Psoas muscle (tissue), 8 donors: ENCODE measurements at regions of chr5 and their contacts with region 1.

Region 1: GRCh38 chr5:107673368-107674136 is 2.8 kb upstream of the EFNA5 start:
- DNase-seq: peak; percentile 83 to 91
- ATAC-seq: peak; percentile 74 to 86 (median 80)
- H3K4me3 ChIP-seq: peak overlapping the region; percentile 71
- H3K27ac ChIP-seq: no peak overlapping the region
- H3K4me1 ChIP-seq: peaks cover 11% of the 10 kb centered on the region
- H3K27me3 ChIP-seq: peaks cover 0 to 32% (median 7%) of the 10 kb centered on the region in 3 donors
- CTCF ChIP-seq: peak; percentile 94

Region 2: DNA sequence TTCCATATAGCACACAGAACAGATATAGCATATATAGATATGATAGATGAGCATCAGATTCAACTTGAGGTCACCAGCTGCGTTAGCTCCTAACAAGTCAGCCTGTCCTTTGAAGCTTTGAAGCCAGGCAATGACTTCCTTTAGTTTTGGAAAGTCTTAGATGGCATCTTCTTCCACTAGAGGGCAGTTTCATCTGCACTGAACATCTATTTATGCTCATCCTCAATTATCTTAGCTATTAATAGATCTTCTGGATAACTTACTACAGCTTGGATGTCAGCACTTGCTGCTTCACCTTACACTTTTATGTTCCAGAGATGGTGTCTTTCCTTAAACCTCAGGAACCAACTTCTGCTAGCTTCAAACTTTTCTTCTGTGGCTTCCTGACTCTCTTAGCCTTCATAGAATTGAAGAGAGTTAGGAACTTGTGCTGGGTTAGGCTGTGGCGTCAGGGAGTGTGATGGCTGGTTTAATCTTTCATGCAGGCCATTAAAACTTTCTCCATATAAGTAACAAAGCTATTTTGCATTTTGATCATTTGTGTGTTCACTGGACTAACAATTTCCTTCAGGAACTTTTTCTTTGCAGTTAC is 1404.2 kb before region 1 on chr5:
- intact Hi-C with region 1: loop called in 1 of 2 experiments (anchors 10 kb)
- DNase-seq: no peak
- ATAC-seq: peak; percentile 55 to 86 (median 72)
- H3K4me3 ChIP-seq: no peak overlapping the region
- H3K27ac ChIP-seq: no peak overlapping the region
- H3K4me1 ChIP-seq: peaks cover 5% of the 10 kb centered on the region
- H3K27me3 ChIP-seq: no peaks in the 10 kb centered on the region
- CTCF ChIP-seq: peak; percentile 59

Region 3: GRCh38 chr5:107542428-107542827 is 131.1 kb before region 1 on chr5:
- intact Hi-C with region 1: loop called in 1 of 2 experiments (anchors 5 kb)
- DNase-seq: peak; percentile 85 to 86
- ATAC-seq: peak; percentile 82 to 92 (median 91)
- H3K4me3 ChIP-seq: peak overlapping the region; percentile 11
- H3K27ac ChIP-seq: peak overlapping the region; percentile 79
- H3K4me1 ChIP-seq: peaks cover 16% of the 10 kb centered on the region
- H3K27me3 ChIP-seq: no peaks in the 10 kb centered on the region
- CTCF ChIP-seq: no peak

Region 4: DNA sequence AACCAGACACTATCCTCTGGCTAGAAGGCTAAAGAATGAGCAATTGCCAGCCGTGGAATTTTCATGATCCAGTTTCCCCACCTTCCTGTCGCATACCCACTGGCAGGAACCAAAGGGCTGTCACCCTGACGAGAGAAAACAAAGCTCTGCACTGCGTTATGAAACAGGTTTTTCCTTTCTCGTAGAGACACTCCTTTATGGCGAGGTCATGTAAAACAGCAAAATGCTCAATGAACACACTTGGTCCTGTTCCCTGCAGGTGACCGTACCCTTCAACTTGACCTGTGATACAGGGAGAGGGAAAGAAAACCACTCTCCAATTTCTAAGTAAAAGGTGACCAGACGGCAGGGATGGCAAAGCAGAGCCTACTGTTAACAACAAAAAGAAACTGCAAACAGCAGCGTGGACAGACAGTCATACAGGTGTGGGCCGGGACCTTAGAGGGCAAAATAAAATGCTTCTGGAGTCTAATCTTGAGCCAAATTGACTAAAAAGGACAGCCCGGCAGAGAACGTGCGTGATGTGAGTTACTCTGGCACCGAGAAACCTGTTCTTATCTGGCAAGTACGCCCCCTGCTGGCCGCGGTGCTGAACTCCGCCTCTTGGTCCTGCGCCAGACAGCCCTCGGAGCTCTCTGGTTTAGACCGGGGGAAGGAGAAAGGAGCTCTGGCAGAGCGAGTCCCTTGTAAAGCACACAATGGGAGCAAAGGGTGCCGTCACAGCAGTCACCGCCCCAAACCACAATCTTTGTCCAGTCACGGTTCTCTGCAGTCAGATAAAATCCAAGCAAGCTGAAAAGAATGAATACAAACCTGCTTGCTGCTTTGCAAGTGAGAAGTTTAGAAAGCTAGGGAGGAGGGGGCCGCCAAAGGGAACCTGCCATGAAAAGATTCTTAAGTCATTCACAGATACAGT is 101.7 kb before region 1 on chr5:
- intact Hi-C with region 1: loop called in 1 of 2 experiments (anchors 10 kb)
- DNase-seq: peak; percentile 90 to 94
- ATAC-seq: peak; percentile 88 to 97 (median 90)
- H3K4me3 ChIP-seq: peak overlapping the region; percentile 63
- H3K27ac ChIP-seq: peak overlapping the region; percentile 73
- H3K4me1 ChIP-seq: peaks cover 3% of the 10 kb centered on the region
- H3K27me3 ChIP-seq: peaks cover 0 to 2% (median 0%) of the 10 kb centered on the region in 3 donors
- CTCF ChIP-seq: peak; percentile 97